ENCODE measurements at regions of chr21 and their contacts with region 1.

Region 1: GRCh38 chr21:17903029-17903806 is 84.1 kb upstream of the C21orf91 start:
- DNase-seq: no peak
- H3K4me3 Mint-ChIP-seq: no peak overlapping the region
- H3K27ac Mint-ChIP-seq: no peak overlapping the region
- H3K4me1 Mint-ChIP-seq: no peaks in the 10 kb centered on the region
- H3K27me3 Mint-ChIP-seq: no peaks in the 10 kb centered on the region
- CTCF ChIP-seq: no peak

Region 2: DNA sequence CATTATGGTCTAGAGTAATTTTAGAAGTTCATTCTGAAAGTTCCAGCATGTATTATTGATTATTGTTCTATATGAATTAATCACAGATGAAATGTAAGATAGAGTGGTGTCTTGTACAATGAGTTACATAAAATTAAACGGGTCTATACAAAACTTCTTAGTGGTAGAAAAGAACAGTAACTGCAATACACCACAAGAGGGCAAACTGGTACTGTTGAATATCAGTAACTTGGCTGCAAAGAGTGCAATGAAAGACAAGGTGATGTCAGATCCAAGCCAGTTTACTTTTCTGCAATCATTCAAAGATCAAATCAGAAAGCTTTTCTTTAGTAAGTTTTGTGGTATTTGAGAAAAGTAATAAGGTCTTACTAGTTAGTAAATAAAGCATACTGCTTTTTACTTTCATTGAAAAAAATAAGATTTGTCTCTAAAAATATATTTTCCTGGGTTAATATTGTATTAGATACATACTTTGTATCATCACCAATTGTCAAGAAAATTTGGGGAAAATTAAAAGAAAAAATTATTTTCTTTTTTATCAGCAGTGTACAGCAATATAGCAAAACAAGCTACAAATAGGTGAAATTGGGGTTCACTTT is 224.1 kb before region 1 on chr21:
- CTCF ChIA-PET with region 1: no interaction called
- intact Hi-C with region 1: loop called (anchors 1 kb)
- DNase-seq: peak; percentile 16
- H3K4me3 Mint-ChIP-seq: no peak overlapping the region
- H3K27ac Mint-ChIP-seq: no peak overlapping the region
- H3K4me1 Mint-ChIP-seq: no peaks in the 10 kb centered on the region
- H3K27me3 Mint-ChIP-seq: no peaks in the 10 kb centered on the region
- CTCF ChIP-seq: peak; percentile 14

Region 3: GRCh38 chr21:17829472-17829871 is 73.7 kb before region 1 on chr21:
- CTCF ChIA-PET with region 1: no interaction called
- intact Hi-C with region 1: loop called (anchors 2 kb)
- DNase-seq: no peak
- H3K4me3 Mint-ChIP-seq: no peak overlapping the region
- H3K27ac Mint-ChIP-seq: no peak overlapping the region
- H3K4me1 Mint-ChIP-seq: no peaks in the 10 kb centered on the region
- H3K27me3 Mint-ChIP-seq: no peaks in the 10 kb centered on the region
- CTCF ChIP-seq: no peak

Measured in Calu3 (cell line).